Esophagus muscularis mucosa (tissue), 4 donors: ENCODE measurements at regions of chr1 and their contacts with region 1.

Region 1: GRCh38 chr1:234610348-234611152 is 572 bp upstream of the IRF2BP2 start:
- DNase-seq: peak; percentile 99
- H3K4me3 ChIP-seq: peak overlapping the region; percentile 52 to 87 (median 62)
- H3K27ac ChIP-seq: peak overlapping the region; percentile 92 to 100 (median 98)
- H3K4me1 ChIP-seq: peaks cover 28 to 43% (median 40%) of the 10 kb centered on the region in 4 donors
- H3K27me3 ChIP-seq: no peaks in the 10 kb centered on the region
- CTCF ChIP-seq: no peak
- EP300 ChIP-seq: peak; percentile 63
- POLR2A ChIP-seq: peak; percentile 94

Region 2: GRCh38 chr1:234670967-234671626 is 60.5 kb after region 1 on chr1:
- intact Hi-C with region 1: no loop called
- DNase-seq: no peak
- H3K4me3 ChIP-seq: no peak overlapping the region
- H3K27ac ChIP-seq: no peak overlapping the region
- H3K4me1 ChIP-seq: peaks cover 6 to 12% (median 9%) of the 10 kb centered on the region in 4 donors
- H3K27me3 ChIP-seq: no peaks in the 10 kb centered on the region
- CTCF ChIP-seq: no peak
- EP300 ChIP-seq: no peak
- POLR2A ChIP-seq: no peak

Region 3: GRCh38 chr1:234918181-234918841 is 307.8 kb after region 1 on chr1:
- intact Hi-C with region 1: loop called (anchors 5 kb)
- DNase-seq: no peak
- H3K4me3 ChIP-seq: no peak overlapping the region
- H3K27ac ChIP-seq: peak overlapping the region; percentile 79 to 85 (median 82)
- H3K4me1 ChIP-seq: peaks cover 61 to 73% (median 68%) of the 10 kb centered on the region in 4 donors
- H3K27me3 ChIP-seq: no peaks in the 10 kb centered on the region
- CTCF ChIP-seq: no peak
- EP300 ChIP-seq: peak; percentile 65
- POLR2A ChIP-seq: no peak

Region 4: DNA sequence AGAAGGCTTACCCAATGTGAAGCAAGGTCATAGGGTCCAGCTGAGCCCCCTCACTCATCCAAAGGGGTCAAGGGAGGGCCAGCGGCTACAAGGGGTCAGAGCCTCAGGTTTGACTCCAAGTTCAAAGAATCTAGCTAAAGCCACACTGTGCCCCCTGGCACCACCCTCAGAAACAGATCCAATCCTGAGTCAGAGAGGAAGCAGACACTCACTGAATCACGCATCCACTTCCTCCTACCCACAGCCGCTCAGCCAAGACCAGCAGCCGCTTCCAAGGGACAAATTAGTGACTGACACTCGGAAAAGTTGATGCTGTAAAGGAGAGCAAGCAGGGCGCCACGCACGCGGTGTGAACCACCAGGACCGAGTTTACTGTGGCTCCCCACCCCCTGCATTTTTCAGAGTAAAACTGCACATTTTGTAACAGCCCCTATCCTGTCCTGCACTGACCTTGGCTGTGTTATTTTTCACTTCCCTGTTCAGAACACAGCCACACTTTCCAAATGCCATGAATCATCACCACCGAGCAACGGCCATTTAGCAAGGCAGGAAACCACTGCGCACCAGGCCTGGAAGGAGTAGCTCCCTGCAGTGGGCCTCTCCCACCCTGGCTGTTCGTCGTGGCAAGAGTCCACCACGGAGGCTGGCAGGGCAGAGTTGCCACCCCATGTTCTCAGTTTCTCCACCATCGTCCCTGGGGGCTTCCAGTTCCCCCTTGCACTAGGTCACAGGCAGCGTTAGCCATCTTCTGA is 370.3 kb after region 1 on chr1:
- intact Hi-C with region 1: loop called (anchors 5 kb)
- DNase-seq: peak; percentile 96
- H3K4me3 ChIP-seq: peak overlapping the region; percentile 3 to 29 (median 19)
- H3K27ac ChIP-seq: peak overlapping the region; percentile 91 to 97 (median 94)
- H3K4me1 ChIP-seq: peaks cover 67 to 84% (median 79%) of the 10 kb centered on the region in 4 donors
- H3K27me3 ChIP-seq: no peaks in the 10 kb centered on the region
- CTCF ChIP-seq: peak in 1 of 3 experiments; percentile 0
- EP300 ChIP-seq: peak; percentile 62
- POLR2A ChIP-seq: peak; percentile 23

Region 5: GRCh38 chr1:234997201-234997895 is 386.8 kb after region 1 on chr1:
- intact Hi-C with region 1: loop called (anchors 5 kb)
- DNase-seq: peak; percentile 99
- H3K4me3 ChIP-seq: peak overlapping the region in 3 of 4 donors; percentile 22 to 30 (median 27)
- H3K27ac ChIP-seq: peak overlapping the region; percentile 95 to 98 (median 96)
- H3K4me1 ChIP-seq: peaks cover 34 to 55% (median 52%) of the 10 kb centered on the region in 4 donors
- H3K27me3 ChIP-seq: no peaks in the 10 kb centered on the region
- CTCF ChIP-seq: no peak
- EP300 ChIP-seq: peak; percentile 99
- POLR2A ChIP-seq: no peak

Region 6: GRCh38 chr1:235079443-235080296 is 469.1 kb after region 1 on chr1:
- intact Hi-C with region 1: loop called (anchors 5 kb)
- DNase-seq: no peak
- H3K4me3 ChIP-seq: no peak overlapping the region
- H3K27ac ChIP-seq: peak overlapping the region; percentile 49 to 89 (median 84)
- H3K4me1 ChIP-seq: peaks cover 56 to 78% (median 75%) of the 10 kb centered on the region in 4 donors
- H3K27me3 ChIP-seq: no peaks in the 10 kb centered on the region
- CTCF ChIP-seq: no peak
- EP300 ChIP-seq: no peak
- POLR2A ChIP-seq: no peak